Common myeloid progenitor, CD34-positive (primary cell): ENCODE measurements at regions of chr1 and their contacts with region 1.

Region 1: DNA sequence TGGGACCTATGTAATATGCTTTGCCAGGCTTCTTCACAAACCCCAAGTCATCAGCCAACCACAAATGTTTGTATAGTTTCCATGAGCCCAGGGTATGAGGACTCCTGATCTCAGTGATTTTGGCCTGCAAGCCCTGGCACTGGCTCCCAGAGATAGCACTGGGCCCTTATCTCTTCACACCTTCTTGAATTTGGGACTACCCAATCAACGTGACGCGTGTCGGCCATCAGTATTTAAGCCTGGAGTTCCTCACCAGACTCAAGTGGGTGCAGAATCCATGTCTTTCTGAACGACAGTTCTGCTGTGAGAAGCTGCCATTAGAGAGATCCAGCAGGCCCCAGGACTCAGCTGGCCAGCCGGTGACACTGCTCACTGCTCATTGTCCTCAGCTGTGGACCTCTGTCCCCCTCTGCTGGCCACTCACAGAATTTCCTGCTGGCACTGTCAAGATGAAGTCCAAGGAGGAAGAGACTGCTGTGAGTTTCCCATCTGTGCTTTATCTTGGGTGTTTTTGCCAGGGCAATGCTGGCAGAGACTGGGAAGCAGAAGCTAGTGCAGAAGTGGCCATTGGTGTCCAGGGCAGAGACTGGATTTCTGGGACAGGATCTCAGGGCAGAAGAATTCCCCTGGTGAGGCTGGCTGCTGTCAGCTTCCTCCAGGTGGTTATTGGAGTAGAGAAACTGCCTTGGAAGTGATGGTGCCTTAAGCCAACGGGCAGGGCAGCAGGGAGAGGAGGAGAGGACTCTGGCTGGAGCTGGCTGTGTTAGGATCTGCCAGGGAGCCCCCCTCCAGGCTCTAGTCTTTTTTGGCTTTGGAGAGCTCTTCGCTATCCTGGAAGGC is 28.4 kb downstream of the TMCC2 start:
- DNase-seq: peak; percentile 83 to 94 (median 93)
- H3K4me3 ChIP-seq: no peak overlapping the region
- H3K27ac ChIP-seq: peak overlapping the region in 1 of 2 experiments; percentile 46
- H3K4me1 ChIP-seq: peaks cover 0 to 19% (median 3%) of the 10 kb centered on the region in 4 experiments
- H3K27me3 ChIP-seq: peaks cover 0 to 12% (median 4%) of the 10 kb centered on the region in 5 experiments

Region 2: GRCh38 chr1:205121660-205122488 is 134.3 kb before region 1 on chr1 and contains the start of gene RBBP5:
- CTCF ChIA-PET with region 1: interaction called, 12 read pairs
- POLR2A ChIA-PET with region 1: interaction called, 3 read pairs
- DNase-seq: peak; percentile 98 to 99 (median 98)
- H3K4me3 ChIP-seq: peak within 1 kb of the TSS; percentile 80 to 100 (median 97)
- H3K27ac ChIP-seq: peak within 1 kb of the TSS; percentile 99 to 100
- H3K4me1 ChIP-seq: peaks cover 10 to 42% (median 32%) of the 10 kb centered on the region in 4 experiments
- H3K27me3 ChIP-seq: no peaks in the 10 kb centered on the region

Region 3: GRCh38 chr1:205141236-205142101 is 114.7 kb before region 1 on chr1:
- CTCF ChIA-PET with region 1: interaction called, 15 read pairs
- POLR2A ChIA-PET with region 1: no interaction called
- DNase-seq: peak; percentile 83 to 93 (median 90)
- H3K4me3 ChIP-seq: peak overlapping the region in 1 of 7 experiments; percentile 24
- H3K27ac ChIP-seq: no peak overlapping the region
- H3K4me1 ChIP-seq: peaks cover 0 to 6% (median 4%) of the 10 kb centered on the region in 4 experiments
- H3K27me3 ChIP-seq: no peaks in the 10 kb centered on the region

Region 4: GRCh38 chr1:205227584-205228006 is 28.6 kb before region 1 on chr1 and contains the start of gene TMCC2:
- CTCF ChIA-PET with region 1: interaction called, 129 read pairs
- POLR2A ChIA-PET with region 1: interaction called, 3 read pairs
- DNase-seq: peak; percentile 89 to 94 (median 93)
- H3K4me3 ChIP-seq: peak within 1 kb of the TSS; percentile 58 to 86 (median 73)
- H3K27ac ChIP-seq: no peak within 1 kb of the TSS
- H3K4me1 ChIP-seq: peaks cover 6 to 35% (median 33%) of the 10 kb centered on the region in 4 experiments
- H3K27me3 ChIP-seq: peaks cover 0 to 13% (median 0%) of the 10 kb centered on the region in 5 experiments

Region 5: DNA sequence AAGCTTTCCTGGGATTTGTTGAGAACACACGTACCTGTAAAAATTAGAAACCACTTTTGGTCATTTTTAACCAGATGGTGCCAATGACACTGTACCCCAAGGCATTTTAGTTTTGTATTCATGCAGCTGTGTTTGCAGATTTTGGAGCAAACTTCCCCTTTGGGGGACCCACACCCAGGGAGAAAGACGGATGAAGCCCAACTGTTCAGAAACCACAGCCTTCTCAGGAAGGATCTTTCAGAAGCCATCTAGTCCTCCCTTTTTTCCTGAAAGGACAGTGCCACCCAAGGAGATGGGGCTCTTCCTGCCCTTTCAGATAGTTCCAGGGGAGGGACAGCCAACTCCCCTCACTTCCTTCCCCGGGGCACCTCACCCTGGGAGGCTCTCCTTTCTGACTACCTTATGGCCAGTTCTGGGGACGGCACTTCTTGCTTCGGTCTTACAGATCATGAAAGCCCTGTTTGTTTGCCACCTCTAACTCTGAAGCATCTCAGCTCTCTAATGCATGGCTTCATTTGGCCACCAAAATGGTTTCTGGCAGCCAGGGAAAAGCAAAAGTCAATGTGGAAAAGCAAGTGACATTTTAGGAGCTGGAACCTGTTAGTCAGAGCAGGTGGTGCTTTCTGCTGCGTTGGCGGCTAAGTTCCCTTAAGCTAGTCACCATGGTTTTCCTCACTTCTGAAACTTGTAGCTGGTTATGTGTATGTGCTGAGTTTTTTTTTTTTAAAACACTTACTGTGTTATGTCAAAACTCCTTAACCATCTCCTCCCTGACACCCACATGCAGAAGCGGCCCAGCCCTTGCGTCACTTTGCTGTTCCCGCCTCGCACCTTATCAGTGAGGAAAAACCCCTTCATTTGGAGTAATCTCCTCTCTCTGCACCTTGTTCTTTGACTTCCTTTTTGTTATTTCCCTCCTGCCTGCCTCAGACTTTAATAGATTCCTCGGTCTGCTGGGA is 18.4 kb before region 1 on chr1:
- CTCF ChIA-PET with region 1: interaction called, 129 read pairs
- POLR2A ChIA-PET with region 1: interaction called, 4 read pairs
- DNase-seq: peak; percentile 56 to 86 (median 82)
- H3K4me3 ChIP-seq: peak overlapping the region in 4 of 7 experiments; percentile 2 to 55 (median 28)
- H3K27ac ChIP-seq: peak overlapping the region; percentile 10 to 63
- H3K4me1 ChIP-seq: peaks cover 13 to 37% (median 32%) of the 10 kb centered on the region in 4 experiments
- H3K27me3 ChIP-seq: no peaks in the 10 kb centered on the region

Region 6: DNA sequence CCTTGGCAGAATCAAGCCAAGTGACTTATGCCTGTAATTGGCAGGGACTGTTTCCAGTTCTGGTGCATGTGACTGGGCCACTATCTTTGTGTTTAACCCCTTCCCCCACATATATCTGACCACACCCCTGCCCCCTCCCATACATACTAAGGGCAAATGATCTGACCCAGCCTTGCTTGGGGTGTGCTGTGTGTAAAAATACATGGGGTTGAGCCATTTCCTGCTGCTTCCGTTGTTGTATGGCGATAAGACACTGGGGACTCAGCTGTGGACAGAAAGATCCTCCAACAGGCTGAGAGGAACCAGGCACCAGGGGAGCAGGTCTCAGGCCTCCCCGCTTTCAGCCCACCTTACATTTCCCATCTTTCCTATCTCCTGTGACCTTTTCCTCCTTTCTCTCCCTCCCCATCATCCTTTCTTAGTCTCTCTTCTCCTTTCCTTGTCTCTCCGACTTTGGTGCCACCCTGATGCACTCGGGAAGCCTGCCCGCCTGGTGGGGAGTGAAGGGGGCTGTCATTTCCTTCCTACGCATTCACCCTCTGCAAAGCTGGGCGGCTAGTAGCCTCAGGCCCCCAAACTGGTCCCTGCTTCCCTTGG is 11.2 kb after region 1 on chr1:
- CTCF ChIA-PET with region 1: interaction called, 126 read pairs
- POLR2A ChIA-PET with region 1: no interaction called
- DNase-seq: peak in 2 of 3 donors; percentile 51 to 64
- H3K4me3 ChIP-seq: no peak overlapping the region
- H3K27ac ChIP-seq: no peak overlapping the region
- H3K4me1 ChIP-seq: peaks cover 0 to 29% (median 25%) of the 10 kb centered on the region in 4 experiments
- H3K27me3 ChIP-seq: peaks cover 0 to 13% (median 7%) of the 10 kb centered on the region in 5 experiments

Region 7: GRCh38 chr1:205273551-205273982 is 17.4 kb after region 1 on chr1:
- CTCF ChIA-PET with region 1: interaction called, 126 read pairs
- POLR2A ChIA-PET with region 1: no interaction called
- DNase-seq: peak; percentile 71 to 86 (median 81)
- H3K4me3 ChIP-seq: no peak overlapping the region
- H3K27ac ChIP-seq: no peak overlapping the region
- H3K4me1 ChIP-seq: peaks cover 0 to 6% (median under 1%) of the 10 kb centered on the region in 4 experiments
- H3K27me3 ChIP-seq: peaks cover 0 to 11% (median 0%) of the 10 kb centered on the region in 5 experiments

Region 8: GRCh38 chr1:205294175-205294913 is 38.2 kb after region 1 on chr1:
- CTCF ChIA-PET with region 1: no interaction called
- POLR2A ChIA-PET with region 1: no interaction called
- DNase-seq: no peak
- H3K4me3 ChIP-seq: no peak overlapping the region
- H3K27ac ChIP-seq: no peak overlapping the region
- H3K4me1 ChIP-seq: peaks cover 0 to 2% (median 0%) of the 10 kb centered on the region in 4 experiments
- H3K27me3 ChIP-seq: peaks cover 0 to 21% (median 0%) of the 10 kb centered on the region in 5 experiments

Region 9: GRCh38 chr1:205382561-205382960 is 126.4 kb after region 1 on chr1:
- CTCF ChIA-PET with region 1: no interaction called
- POLR2A ChIA-PET with region 1: no interaction called
- DNase-seq: no peak
- H3K4me3 ChIP-seq: no peak overlapping the region
- H3K27ac ChIP-seq: no peak overlapping the region
- H3K4me1 ChIP-seq: no peaks in the 10 kb centered on the region
- H3K27me3 ChIP-seq: peaks cover 0 to 7% (median 4%) of the 10 kb centered on the region in 5 experiments

Region 10: DNA sequence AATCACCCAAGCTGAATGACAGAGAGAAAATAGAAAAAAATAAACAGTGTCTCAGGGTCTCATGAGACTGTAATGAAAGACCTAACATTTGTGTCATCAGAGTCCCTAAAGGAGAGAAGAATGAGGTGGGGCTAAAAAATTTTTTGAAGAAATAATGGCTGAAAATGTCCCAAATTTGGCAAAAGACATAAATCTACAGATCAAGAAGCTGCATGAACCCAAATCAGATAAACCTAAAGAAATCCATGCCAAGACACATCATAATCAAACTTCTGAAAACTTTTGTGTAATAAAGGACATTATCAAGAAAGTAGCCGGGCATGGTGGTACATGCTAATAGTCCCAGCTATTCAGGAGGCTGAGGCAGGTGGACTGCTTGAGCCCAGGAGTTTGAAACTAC is 136.5 kb after region 1 on chr1:
- CTCF ChIA-PET with region 1: no interaction called
- POLR2A ChIA-PET with region 1: no interaction called
- DNase-seq: no peak
- H3K4me3 ChIP-seq: no peak overlapping the region
- H3K27ac ChIP-seq: no peak overlapping the region
- H3K4me1 ChIP-seq: no peaks in the 10 kb centered on the region
- H3K27me3 ChIP-seq: peaks cover 3 to 18% (median 4%) of the 10 kb centered on the region in 5 experiments